Right ventricle myocardium superior (tissue), 1 donor: ENCODE measurements at regions of chr22 and their contacts with region 1.

Region 1: DNA sequence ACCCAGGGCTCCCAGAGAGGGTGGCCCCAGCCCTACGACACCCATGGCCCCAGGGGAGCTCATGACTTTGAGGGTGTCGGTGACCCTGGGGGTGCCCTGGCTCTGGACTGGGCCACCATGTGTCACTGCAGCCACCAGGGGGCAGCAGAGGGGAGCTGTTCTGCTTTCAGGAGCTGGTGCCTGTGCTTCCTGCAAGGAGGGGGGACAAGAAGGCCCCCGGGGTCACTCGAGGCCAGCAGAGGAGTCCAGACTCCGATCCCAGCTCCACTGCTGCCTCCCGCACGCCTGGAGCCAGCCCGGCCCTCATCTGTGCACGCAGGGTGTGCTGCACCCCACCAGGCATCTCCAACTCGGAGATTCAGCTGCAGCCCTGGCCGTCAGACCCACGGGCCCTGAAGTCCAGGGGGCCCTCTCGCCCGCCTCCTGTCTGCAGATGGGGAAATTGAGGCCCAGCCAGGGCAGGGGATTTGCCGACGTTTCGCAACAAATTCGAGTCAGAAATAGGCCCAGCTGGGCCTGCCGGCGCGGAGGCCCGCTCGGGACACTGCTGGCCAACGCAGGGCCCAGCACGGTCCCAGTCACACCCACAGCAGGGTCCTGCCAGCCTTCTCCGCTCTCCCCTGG is 29.5 kb upstream of the WNT7B start:
- DNase-seq: peak; percentile 96
- ATAC-seq: peak; percentile 81

Region 2: GRCh38 chr22:45896261-45896951 is 110.1 kb before region 1 on chr22:
- intact Hi-C with region 1: no loop called
- DNase-seq: peak; percentile 14
- ATAC-seq: no peak

Region 3: DNA sequence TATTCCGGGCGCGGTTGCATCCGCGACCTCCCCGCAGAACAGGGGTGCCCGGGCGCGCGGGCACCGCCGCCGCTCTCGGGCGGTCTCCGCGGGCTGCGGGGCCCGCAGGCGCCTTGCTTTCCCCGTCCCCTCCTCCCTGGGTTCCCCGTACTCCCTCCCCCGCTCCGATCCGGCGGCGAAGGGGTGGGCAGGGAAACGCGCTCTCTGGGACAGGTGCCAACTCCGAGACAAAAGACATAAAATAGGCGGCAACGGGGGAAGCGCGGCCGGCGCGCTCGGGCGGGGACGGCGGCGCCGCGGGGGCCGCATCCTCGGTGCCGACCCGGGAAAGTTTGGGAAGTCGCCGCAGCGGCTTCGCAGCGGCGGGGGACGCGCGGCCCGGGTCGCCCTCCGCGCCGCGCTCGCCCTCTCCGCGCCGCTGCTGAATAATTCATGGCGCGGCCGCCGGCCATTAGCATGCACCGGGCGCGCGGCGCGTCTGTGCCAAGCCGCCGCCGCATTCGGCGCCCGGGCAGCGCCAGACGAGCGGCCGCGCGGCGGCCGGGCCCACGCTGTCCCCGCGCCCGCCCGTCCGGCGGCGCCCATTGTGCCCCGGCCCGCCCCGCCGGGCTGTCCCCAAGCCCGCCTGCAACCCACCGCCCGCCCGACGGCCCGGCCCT is 65.1 kb after region 1 on chr22:
- intact Hi-C with region 1: loop called (anchors 10 kb)
- DNase-seq: peak; percentile 94
- ATAC-seq: peak; percentile 48

Region 4: GRCh38 chr22:46131151-46131587 is 124.7 kb after region 1 on chr22:
- intact Hi-C with region 1: no loop called
- DNase-seq: no peak
- ATAC-seq: no peak